AG04449 (cell line): ENCODE measurements at regions of chr2 and their contacts with region 1.

Region 1: DNA sequence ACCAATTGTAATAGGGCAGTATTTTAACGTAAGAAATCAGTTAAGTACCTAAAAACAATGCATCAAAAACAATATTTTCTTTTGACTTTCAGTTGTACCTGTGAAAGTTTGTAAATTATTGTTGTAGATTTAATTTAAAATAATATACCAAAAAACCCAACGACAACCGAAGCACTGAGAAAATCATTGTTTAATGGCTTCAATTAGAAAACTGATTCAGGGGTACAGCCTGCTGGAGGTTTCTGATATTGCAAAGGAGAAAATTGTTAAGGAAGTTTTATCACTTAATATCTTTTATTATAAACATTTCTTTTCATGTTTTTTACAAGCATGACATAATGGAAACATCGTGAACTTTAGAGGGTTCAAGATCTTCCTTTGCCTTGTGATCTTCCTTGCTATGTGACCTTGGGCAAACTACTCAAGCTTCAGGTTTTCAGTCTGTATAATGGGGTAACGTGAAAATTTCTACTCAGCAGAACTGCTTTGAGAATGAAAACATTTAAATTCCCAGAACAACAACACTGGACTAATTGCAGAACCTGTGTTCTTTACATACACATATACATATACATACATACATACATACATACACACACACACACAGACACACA is 76.3 kb upstream of the GLS start:
- DNase-seq: no peak
- H3K4me3 ChIP-seq: no peak overlapping the region
- CTCF ChIP-seq: peak; percentile 31

Region 2: DNA sequence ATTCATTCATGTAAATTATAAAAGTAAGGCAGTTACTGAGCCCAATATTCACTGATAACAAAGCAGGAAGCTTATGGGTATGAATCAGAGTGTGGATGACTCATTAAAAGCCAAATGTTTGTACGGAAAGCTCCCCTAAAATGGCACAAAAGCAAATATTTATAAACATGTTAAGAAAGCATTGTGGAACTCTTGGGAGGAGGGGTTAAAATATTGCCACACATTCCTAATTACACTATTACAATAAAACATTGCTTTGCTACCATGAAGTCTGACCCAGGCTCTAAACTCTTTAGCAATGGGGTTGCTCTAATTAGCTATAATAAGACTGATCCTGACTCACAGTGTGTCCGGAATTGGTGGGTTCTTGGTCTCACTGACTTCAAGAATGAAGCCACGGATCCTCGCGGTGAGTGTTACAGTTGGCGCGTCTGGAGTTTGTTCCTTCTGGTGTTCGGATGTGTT is 44.5 kb before region 1 on chr2:
- CTCF ChIA-PET with region 1: no interaction called
- POLR2A ChIA-PET with region 1: no interaction called
- DNase-seq: peak; percentile 36
- H3K4me3 ChIP-seq: no peak overlapping the region
- CTCF ChIP-seq: no peak

Region 3: DNA sequence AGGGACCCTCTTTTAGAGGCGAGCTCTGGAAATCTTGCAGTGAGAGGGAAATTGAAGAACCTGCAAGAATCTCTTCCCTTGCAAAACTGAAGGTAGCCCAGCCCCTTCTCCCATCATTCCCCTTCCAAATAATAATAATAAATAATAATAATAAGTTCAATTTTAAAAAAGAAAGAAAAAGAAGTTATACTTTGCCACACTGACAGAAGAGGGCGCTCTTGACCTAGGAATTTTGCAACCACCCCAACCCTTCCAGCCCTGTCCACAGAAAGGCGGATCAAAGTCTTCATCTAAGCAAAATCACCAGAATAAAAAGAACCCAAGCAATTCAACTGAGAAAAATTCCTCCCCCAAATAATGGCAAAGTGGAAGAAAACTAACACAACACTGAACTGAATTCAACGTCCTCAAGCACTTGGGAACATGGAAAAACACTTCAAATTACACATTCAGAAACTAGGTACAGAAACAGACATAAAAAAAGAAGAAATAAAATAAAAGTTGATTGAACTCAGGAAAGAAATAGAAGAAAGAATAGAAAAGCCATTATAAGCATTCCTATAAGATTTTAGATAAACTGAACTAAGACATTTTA is 22.6 kb before region 1 on chr2:
- CTCF ChIA-PET with region 1: interaction called, 37 read pairs
- POLR2A ChIA-PET with region 1: no interaction called
- DNase-seq: peak; percentile 12
- H3K4me3 ChIP-seq: no peak overlapping the region
- CTCF ChIP-seq: peak; percentile 46

Region 4: GRCh38 chr2:190791347-190791975 is 12.8 kb before region 1 on chr2:
- CTCF ChIA-PET with region 1: interaction called, 13 read pairs
- POLR2A ChIA-PET with region 1: no interaction called
- DNase-seq: peak; percentile 12
- H3K4me3 ChIP-seq: no peak overlapping the region
- CTCF ChIP-seq: no peak

Region 5: GRCh38 chr2:191148281-191148680 is 344.0 kb after region 1 on chr2:
- CTCF ChIA-PET with region 1: no interaction called
- POLR2A ChIA-PET with region 1: no interaction called
- DNase-seq: no peak
- H3K4me3 ChIP-seq: no peak overlapping the region
- CTCF ChIP-seq: no peak